ENCODE measurements at regions of chr15 and their contacts with region 1.

Region 1: DNA sequence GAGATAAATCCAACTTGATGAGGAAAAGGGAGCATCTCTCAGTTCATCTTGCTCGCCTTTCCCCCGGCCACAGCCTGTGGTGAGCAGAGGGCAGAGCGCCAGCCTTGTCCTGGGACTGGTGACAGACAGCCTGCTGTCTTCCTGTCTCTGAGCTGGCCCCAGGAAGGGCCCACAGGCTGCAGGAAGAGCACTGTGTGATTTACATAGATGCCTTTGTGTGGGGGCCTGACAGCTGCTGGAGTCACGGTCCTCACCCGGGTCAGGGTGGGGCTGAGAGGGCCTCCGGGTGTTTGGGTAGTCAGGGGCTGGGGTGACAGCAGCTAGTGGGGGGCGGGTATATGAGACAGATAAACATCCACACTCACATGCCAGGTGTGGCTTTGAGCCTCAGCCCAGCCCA is 29.3 kb downstream of the PLA2G4D start:
- H3K4me3 ChIP-seq: no peak overlapping the region
- H3K27ac ChIP-seq: no peak overlapping the region
- H3K4me1 ChIP-seq: no peaks in the 10 kb centered on the region
- CTCF ChIP-seq: no peak

Region 2: DNA sequence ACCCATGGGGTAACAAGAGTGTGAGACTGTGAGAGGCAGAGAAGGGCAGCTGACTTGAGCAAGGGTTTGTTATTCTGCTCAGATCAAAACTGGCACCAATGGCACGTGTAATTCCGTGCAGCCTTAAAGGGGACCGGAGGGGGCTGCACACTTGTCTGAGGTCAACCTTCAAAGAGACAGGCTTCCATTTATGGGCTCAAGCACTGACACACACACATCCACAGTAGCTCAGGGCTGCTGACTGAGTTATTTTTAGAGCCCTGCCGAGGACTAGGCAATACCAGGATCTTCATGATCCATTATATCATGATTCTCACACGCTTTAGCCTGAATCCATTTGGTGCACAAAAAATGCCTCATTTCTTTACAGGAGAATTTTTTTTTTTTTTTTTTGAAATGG is 150.6 kb before region 1 on chr15:
- CTCF ChIA-PET with region 1: no interaction called
- POLR2A ChIA-PET with region 1: no interaction called
- H3K4me3 ChIP-seq: no peak overlapping the region
- H3K27ac ChIP-seq: no peak overlapping the region
- H3K4me1 ChIP-seq: no peaks in the 10 kb centered on the region
- CTCF ChIP-seq: no peak

Region 3: DNA sequence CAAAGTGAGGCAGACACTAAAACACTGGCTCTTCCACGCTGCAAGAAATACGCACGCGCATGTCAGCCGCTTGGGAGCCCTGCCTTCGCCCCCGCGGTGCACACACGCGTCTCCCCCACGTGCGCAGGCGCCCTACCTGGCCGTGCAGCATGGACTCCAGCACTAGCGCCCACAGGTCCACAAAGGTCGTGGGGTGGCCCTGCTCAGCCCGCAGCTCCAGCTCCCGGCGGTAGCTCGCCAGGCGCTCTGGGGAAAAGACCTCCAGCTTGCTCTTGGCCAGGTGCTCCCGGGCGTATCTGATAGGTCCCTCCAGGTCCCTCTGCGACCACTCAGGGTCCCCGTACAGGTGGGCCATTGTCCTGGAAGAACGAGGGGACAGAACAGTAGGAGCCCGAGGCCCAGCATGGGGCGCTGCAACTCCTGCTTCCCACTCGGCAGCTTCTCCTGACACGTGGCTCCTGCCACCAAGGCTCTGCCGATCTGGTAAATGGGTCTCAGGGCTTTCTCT is 14.4 kb after region 1 on chr15:
- CTCF ChIA-PET with region 1: interaction called, 33 read pairs
- POLR2A ChIA-PET with region 1: no interaction called
- H3K4me3 ChIP-seq: no peak overlapping the region
- H3K27ac ChIP-seq: no peak overlapping the region
- H3K4me1 ChIP-seq: no peaks in the 10 kb centered on the region
- CTCF ChIP-seq: no peak

Region 4: GRCh38 chr15:42084460-42085235 is 19.6 kb after region 1 on chr15:
- CTCF ChIA-PET with region 1: interaction called, 33 read pairs
- POLR2A ChIA-PET with region 1: no interaction called
- H3K4me3 ChIP-seq: no peak overlapping the region
- H3K27ac ChIP-seq: no peak overlapping the region
- H3K4me1 ChIP-seq: no peaks in the 10 kb centered on the region
- CTCF ChIP-seq: peak; percentile 78

Region 5: DNA sequence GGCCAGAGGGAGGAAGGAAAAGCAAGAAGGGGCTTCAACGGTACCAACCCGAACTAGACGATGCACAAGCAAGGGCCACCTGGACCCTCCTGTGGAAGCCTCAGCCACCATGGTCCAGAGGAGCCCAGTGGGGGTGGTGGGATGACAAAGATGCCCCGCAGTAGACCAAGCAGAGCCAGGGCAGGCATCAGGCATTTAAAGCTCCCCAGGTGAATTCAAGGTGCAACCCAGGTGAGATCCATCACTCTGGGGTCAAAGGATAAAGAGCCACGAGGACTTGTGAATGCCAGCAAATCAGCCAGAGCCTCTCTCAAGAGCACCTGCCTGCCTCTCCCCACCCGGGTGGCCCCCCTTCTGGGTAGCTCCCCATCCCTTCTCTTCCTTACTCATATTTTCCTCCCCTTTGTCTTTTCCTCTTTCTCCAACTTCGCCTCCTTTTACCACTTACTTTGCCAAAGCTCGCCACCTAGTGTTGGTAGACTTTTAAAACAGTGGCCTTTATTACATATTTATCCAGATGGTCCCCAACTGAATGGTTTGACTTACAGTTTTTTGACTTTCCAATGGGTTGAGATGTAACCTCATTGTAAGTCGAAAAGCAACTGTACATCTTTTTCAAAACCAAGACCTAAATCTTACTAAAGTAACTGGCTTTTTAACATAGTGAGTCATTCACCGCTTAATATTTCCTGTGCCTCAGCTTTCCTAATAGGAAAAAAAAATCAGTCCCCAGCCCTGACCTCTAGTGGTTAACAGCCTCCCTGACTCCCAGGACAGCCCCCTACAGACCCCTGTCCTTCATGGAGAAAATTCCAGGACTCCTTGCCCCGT is 72.6 kb after region 1 on chr15:
- CTCF ChIA-PET with region 1: interaction called, 18 read pairs
- POLR2A ChIA-PET with region 1: no interaction called
- H3K4me3 ChIP-seq: no peak overlapping the region
- H3K27ac ChIP-seq: no peak overlapping the region
- H3K4me1 ChIP-seq: no peaks in the 10 kb centered on the region
- CTCF ChIP-seq: no peak

Region 6: GRCh38 chr15:42413920-42414319 is 348.9 kb after region 1 on chr15:
- CTCF ChIA-PET with region 1: no interaction called
- POLR2A ChIA-PET with region 1: no interaction called
- H3K4me3 ChIP-seq: no peak overlapping the region
- H3K27ac ChIP-seq: no peak overlapping the region
- H3K4me1 ChIP-seq: 0 out of 2 replicates have a peak, but pooled peaks cover 3% of the 10 kb centered on the region
- CTCF ChIP-seq: no peak

Measured in HEK293 (cell line).